ENCODE measurements at regions of chr10 and their contacts with region 1.

Region 1: GRCh38 chr10:11823122-11823988 is at the start of gene PROSER2:
- DNase-seq: peak; percentile 64 to 87 (median 81)
- H3K4me3 ChIP-seq: peak within 1 kb of the TSS; percentile 71 to 95 (median 90)
- H3K27ac ChIP-seq: peak within 1 kb of the TSS; percentile 33 to 49
- H3K4me1 ChIP-seq: peaks cover 5 to 21% (median 13%) of the 10 kb centered on the region in 4 experiments
- H3K27me3 ChIP-seq: no peaks in the 10 kb centered on the region

Region 2: DNA sequence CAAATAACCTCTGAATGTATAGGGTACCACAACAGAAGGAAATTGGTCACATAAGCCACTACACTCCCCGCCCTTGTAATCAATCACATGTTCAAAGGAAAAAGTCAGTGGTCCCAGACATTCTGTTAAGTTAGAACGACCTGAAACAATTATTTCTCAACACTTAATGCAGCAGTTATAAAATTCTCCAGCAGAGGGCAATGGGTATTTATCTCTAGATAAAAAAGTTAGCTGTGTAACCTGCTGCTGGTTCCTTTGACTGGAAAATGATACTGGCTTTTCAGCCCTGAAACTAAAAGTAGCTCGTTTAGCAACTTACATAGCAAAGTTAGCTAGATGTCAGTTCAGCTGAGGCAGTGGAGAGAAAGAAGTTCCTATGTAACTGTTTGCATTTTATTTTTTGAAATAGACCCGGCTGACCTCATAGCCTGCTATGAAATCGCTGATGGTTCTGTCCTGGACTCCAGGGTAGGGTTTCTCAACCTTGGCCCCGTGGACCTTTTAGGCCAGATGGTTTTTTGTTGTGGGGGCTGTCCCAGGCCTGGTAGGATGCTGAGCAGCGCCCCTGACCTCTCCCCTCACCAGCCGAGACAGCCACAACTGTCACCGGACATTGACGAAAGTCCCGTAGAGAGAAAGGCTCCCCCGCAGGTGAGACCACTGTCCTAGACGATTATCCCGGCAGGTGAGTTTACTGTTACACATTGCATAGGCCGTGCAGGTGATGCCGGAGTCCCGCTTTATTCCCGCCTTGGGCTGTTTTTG is 40.4 kb before region 1 on chr10:
- CTCF ChIA-PET with region 1: interaction called, 38 read pairs
- POLR2A ChIA-PET with region 1: no interaction called
- DNase-seq: peak; percentile 71 to 84 (median 79)
- H3K4me3 ChIP-seq: no peak overlapping the region
- H3K27ac ChIP-seq: no peak overlapping the region
- H3K4me1 ChIP-seq: peaks cover 0 to 5% (median 0%) of the 10 kb centered on the region in 4 experiments
- H3K27me3 ChIP-seq: no peaks in the 10 kb centered on the region

Region 3: DNA sequence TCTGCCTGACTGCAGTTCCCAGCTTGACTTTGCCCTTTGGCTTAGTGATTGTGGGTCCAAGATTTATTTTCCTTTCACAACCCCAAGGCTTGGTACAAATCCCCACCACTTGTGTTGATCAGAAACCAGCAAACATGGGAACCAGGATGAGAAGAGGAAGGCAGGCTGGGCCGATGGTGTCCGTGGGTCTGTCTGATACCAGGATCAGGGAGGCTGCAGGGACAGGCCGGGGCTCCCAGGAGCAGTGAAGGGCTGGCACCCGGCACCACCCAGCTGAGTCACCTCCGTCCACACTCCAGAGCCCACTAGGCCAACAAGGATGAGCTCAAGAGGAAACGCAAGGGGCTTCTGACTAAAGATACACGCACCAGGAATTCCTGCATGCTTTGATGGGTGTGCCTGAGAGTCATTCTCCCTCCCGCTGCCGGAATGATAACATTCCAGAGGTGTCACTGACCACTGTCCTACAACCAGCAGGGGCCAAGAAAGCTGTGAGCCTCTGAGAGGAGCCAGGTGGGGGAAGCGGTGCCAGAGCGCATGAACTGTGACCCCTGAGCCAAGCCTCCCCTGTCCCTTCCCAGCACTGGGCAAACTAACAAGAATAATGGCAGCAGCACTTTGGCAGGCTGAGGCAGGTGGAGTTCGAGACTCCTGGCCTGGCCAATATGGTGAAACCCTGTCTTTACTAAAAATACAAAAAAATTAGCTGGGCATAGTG is 29.4 kb before region 1 on chr10:
- CTCF ChIA-PET with region 1: interaction called, 49 read pairs
- POLR2A ChIA-PET with region 1: no interaction called
- DNase-seq: no peak
- H3K4me3 ChIP-seq: no peak overlapping the region
- H3K27ac ChIP-seq: no peak overlapping the region
- H3K4me1 ChIP-seq: peaks cover 0 to 23% (median 15%) of the 10 kb centered on the region in 4 experiments
- H3K27me3 ChIP-seq: no peaks in the 10 kb centered on the region

Region 4: DNA sequence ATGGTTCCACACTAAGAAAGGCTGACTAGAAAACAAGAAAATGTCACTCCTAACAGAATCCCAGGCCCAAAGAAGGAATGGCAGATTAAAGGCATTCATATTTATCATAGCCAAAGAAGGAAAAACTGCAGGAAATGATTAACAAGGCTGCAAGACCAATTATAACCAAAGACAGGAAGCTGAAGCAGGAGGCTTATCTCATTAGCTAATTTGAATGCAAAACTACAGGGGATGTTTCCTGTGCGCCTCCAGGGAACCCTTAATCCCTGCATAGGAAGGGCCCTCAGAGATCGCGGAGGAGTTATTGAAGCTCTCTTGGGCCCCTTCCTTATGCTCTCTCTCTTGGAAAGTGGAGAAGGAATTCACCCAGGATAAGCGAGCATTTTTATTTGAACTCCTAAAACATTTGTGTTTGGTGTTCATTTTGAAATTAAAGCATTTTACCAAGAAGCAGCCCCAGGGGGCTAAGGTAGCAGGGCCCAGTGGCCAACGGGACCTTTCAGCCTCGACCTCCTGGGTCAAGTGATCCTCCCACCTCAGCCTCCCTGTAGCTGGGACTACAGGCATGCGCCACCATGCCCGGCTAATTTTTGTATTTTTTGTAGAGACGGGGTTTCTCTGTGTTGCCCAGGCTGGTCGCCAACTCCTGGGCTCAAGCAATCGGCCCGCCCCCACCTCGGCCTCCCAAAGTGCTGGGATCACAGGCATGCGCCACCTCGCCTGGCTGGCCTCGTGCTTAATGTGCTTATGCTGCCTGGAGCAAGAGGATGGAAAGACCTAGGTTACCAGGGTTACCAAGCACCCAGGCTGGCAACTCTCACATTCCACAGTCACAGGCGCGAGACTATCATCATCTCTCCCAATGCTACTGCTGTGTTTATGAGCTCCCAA is 24.3 kb before region 1 on chr10:
- CTCF ChIA-PET with region 1: interaction called, 49 read pairs
- POLR2A ChIA-PET with region 1: interaction called, 3 read pairs
- DNase-seq: peak; percentile 84 to 91 (median 86)
- H3K4me3 ChIP-seq: peak overlapping the region in 3 of 7 experiments; percentile 10 to 48 (median 38)
- H3K27ac ChIP-seq: peak overlapping the region; percentile 46 to 70
- H3K4me1 ChIP-seq: peaks cover 0 to 33% (median 23%) of the 10 kb centered on the region in 4 experiments
- H3K27me3 ChIP-seq: no peaks in the 10 kb centered on the region

Region 5: GRCh38 chr10:11810313-11810766 is 13.0 kb before region 1 on chr10:
- CTCF ChIA-PET with region 1: interaction called, 15 read pairs
- POLR2A ChIA-PET with region 1: no interaction called
- DNase-seq: no peak
- H3K4me3 ChIP-seq: no peak overlapping the region
- H3K27ac ChIP-seq: no peak overlapping the region
- H3K4me1 ChIP-seq: peaks cover 0 to 12% (median 11%) of the 10 kb centered on the region in 4 experiments
- H3K27me3 ChIP-seq: no peaks in the 10 kb centered on the region